Activated CD8-positive, alpha-beta T cell treated with anti-CD3 and anti-CD28 coated beads for 36 hours (primary cell): ENCODE measurements at regions of chr16 and their contacts with region 1.

Region 1: GRCh38 chr16:81095953-81096717 is at the start of gene GCSH:
- DNase-seq: peak; percentile 99
- ATAC-seq: peak; percentile 99
- H3K4me3 Mint-ChIP-seq: peak within 1 kb of the TSS; percentile 75
- H3K27ac Mint-ChIP-seq: peak within 1 kb of the TSS; percentile 64
- H3K4me1 Mint-ChIP-seq: peaks cover 14% of the 10 kb centered on the region
- H3K27me3 Mint-ChIP-seq: no peaks in the 10 kb centered on the region
- CTCF ChIP-seq: no peak
- total RNA-seq, gene GCSH: 21.0 to 25.3 TPM

Region 2: DNA sequence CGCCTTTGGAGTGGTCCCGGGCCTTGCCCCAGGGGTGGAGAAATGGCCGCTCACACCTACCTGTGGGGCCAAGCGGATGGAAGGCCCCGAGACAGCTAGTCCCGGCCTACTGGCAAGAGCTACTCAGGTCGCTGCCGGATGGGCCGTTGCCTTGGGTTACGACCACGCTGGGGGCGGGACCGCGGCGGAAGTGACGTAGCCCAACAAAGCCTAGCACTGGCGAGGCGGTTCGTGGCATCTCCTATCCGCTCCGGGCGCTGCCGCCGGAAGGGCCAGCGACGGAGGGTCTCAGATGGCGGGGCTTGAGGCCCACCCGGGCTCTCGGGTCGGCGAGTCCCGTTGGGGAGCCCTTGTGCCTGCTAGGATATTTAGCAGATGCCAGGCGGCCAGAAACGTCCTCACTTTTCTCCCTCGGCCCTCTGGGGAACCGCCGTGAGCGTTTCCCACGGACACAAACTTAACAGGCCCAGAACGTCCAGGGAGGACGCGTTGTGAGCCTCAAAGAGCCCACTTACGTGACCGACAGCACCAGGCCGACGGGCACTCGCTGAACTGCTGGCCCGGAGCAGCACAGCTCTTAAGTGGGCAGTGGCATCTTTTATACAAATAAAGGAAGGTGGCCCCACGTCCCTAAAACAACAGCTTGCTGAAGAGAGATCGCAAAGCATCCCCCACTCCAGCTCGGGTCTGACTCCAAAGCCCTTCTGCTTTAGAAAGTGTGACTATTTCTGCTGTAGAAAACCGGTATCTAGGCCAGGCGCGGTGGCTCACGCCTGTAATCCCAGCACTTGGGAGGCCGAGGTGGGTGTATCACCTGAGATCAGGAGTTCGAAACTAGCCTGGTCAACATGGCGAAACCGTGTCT is 18.8 kb before region 1 on chr16 and contains the start of gene C16orf46:
- CTCF ChIA-PET with region 1: interaction called, 6 read pairs
- POLR2A ChIA-PET with region 1: interaction called, 10 read pairs
- intact Hi-C with region 1: loop called (anchors 1 kb)
- DNase-seq: peak; percentile 99
- ATAC-seq: peak; percentile 85
- H3K4me3 Mint-ChIP-seq: no peak within 1 kb of the TSS
- H3K27ac Mint-ChIP-seq: no peak within 1 kb of the TSS
- H3K4me1 Mint-ChIP-seq: peaks cover 3% of the 10 kb centered on the region
- H3K27me3 Mint-ChIP-seq: peaks cover 2% of the 10 kb centered on the region
- CTCF ChIP-seq: no peak
- total RNA-seq, gene C16orf46: 0.59 to 0.60 TPM

Region 3: DNA sequence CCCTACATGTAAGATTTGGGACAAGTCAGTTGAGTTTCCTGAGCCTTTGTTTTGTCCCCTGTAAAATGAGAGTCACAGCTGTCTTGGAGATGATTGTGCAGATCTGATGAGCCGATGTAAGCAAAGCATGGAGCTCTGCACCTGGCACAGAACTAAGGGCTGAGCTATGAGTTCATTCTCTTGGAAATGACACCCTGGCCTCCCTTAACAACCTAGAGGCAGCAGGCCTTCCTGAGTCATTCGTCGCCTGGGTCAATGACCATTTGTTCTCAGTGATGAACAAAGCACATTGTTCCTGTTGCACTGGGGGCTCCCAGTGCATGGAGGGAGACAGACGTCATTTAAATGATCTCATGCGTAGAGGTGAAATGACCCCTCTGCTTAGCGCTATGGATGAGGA is 62.8 kb after region 1 on chr16:
- CTCF ChIA-PET with region 1: no interaction called
- POLR2A ChIA-PET with region 1: no interaction called
- intact Hi-C with region 1: no loop called
- DNase-seq: no peak
- ATAC-seq: no peak
- H3K4me3 Mint-ChIP-seq: no peak overlapping the region
- H3K27ac Mint-ChIP-seq: no peak overlapping the region
- H3K4me1 Mint-ChIP-seq: no peaks in the 10 kb centered on the region
- H3K27me3 Mint-ChIP-seq: peaks cover 2% of the 10 kb centered on the region
- CTCF ChIP-seq: no peak

Region 4: DNA sequence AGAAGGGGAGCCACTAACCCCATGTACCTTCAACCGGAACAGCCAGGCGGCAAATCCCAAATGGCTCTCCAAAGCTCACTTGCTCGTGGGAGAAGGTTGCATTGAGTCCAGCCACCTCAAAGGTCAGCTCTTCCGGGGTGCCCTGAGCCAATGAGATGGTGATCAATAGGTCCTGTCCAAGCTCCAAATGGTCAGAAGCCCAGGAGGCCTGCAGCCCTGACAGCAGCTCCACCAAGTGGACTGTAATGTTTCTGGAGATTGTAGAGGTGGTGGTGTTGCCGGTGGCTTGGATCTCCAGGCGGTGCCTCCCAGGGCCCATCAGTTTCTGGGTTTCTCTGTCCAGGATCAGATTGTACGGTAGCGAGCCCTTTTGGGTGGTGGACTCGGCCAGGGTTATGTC is 102.5 kb after region 1 on chr16:
- CTCF ChIA-PET with region 1: no interaction called
- POLR2A ChIA-PET with region 1: no interaction called
- intact Hi-C with region 1: no loop called
- DNase-seq: no peak
- ATAC-seq: no peak
- H3K4me3 Mint-ChIP-seq: no peak overlapping the region
- H3K27ac Mint-ChIP-seq: no peak overlapping the region
- H3K4me1 Mint-ChIP-seq: no peaks in the 10 kb centered on the region
- H3K27me3 Mint-ChIP-seq: peaks cover 14% of the 10 kb centered on the region
- CTCF ChIP-seq: no peak